ENCODE measurements at regions of chr2 and their contacts with region 1.

Region 1: DNA sequence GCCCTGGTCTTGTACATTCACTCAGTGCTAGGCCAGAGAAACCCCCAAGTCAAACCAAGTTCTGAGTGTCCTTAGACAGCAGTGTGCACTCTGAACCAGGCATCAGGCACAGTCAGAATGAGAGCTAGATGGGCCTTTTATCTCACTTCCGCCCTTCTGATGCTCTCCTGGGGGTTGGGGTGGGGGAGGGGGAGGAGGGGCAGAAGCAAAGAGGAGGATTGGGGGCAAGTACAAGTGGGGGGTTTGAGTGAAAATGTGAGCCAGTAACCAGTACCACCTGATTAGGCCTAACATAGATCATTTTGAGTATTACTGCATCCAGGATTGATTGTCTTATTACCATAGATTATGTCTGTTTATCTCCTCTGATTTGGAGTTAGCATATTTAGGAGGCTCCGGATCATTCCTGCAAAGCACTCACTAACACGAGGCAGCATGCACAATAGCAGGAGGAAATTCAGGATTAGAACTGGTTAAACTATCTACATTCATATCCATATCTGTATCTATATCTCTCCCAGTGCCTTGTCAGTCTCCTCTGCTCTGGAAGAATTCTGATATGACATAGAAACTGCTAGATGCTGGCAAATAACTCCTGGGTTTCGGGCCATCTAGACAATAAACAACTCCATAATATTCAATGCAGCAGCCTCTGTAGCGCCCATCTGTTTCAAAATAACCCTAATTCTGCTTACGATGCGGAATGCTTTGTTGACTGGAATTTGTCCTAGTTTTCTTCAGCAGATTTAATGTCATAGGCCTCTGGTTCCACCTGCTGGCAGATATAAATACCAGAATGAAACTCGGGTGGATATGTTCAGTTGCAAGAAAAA is 149.1 kb downstream of the RHBDD1 start:
- DNase-seq: peak; percentile 15
- H3K4me3 ChIP-seq: no peak overlapping the region
- H3K27ac ChIP-seq: peak overlapping the region in 3 of 4 donors; percentile 4 to 34 (median 31)
- H3K4me1 ChIP-seq: peaks cover 0 to 7% (median 2%) of the 10 kb centered on the region in 4 donors
- H3K27me3 ChIP-seq: no peaks in the 10 kb centered on the region
- CTCF ChIP-seq: peak; percentile 64 to 70 (median 68)
- EP300 ChIP-seq: no peak
- POLR2A ChIP-seq: no peak

Region 2: GRCh38 chr2:225889446-225889850 is 1095.5 kb before region 1 on chr2:
- in situ Hi-C with region 1: loop called in 2 of 4 experiments (anchors 25 kb)
- intact Hi-C with region 1: no loop called
- DNase-seq: no peak
- H3K4me3 ChIP-seq: no peak overlapping the region
- H3K27ac ChIP-seq: no peak overlapping the region
- H3K4me1 ChIP-seq: no peaks in the 10 kb centered on the region
- H3K27me3 ChIP-seq: no peaks in the 10 kb centered on the region
- CTCF ChIP-seq: peak; percentile 64 to 79 (median 73)
- EP300 ChIP-seq: no peak
- POLR2A ChIP-seq: no peak

Region 3: DNA sequence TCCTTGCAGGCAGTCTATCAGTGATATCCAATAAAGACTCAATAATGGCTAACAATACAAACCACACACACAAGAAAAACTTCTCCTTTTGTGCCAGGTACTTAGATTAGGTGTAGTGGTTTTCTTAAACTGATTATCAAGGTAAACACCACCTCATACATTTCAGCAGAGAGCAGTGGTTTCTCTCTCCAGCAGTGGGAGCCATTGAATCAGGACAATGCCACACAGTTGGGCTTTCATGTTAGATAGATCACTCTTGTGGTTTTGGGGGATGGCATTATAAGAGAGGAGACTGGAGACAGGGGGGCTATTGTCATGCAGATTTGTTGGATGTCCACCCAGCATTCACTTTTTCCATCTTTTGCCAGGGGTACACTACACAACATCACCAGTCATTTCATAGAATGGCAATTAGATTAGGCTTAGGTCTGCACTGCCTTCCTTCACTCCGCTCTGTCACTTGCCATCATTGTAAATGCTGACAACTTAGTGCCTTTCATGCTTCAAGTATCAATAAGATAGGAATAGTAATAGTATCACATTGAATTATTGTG is 171.7 kb before region 1 on chr2:
- in situ Hi-C with region 1: loop called (anchors 5 to 25 kb)
- intact Hi-C with region 1: no loop called
- DNase-seq: no peak
- H3K4me3 ChIP-seq: no peak overlapping the region
- H3K27ac ChIP-seq: no peak overlapping the region
- H3K4me1 ChIP-seq: no peaks in the 10 kb centered on the region
- H3K27me3 ChIP-seq: no peaks in the 10 kb centered on the region
- CTCF ChIP-seq: peak in 2 of 5 experiments; percentile 12
- EP300 ChIP-seq: no peak
- POLR2A ChIP-seq: no peak

Region 4: DNA sequence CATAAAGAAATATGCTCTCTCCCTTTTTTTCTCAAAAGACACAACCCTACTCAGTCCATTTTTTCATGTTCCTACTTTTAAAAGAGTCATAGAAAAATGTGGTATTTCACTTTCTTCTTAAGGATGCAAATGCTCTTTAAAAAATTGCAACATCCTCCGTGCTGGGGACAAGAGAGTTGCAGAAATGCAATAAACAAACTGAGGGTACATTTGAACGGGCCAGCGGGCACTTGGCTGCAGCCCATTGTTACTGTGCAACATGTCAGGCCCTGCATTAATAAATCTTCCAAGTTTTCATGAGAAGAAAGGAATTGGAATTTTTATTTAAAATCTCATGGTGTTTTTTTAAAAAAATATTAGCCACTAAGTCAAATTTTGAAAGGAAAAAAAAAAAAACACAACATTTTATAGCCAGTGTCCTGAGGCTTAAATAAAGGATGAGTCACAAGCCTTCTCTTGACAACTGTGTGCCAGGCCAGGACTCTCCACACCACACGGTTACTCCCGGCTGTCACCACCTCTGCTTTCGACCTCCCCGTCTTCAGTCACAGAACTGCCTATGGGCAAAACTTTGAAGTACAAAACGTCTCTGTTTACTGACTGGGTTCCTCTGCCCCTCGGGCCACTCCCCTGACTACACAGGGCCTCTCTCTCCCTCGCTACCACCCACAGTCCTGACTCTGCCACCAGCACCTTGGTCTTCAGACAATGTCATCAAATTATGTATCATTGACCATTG is 282.6 kb after region 1 on chr2:
- in situ Hi-C with region 1: no loop called
- intact Hi-C with region 1: no loop called
- DNase-seq: no peak
- H3K4me3 ChIP-seq: no peak overlapping the region
- H3K27ac ChIP-seq: no peak overlapping the region
- H3K4me1 ChIP-seq: no peaks in the 10 kb centered on the region
- H3K27me3 ChIP-seq: no peaks in the 10 kb centered on the region
- CTCF ChIP-seq: no peak
- EP300 ChIP-seq: no peak
- POLR2A ChIP-seq: no peak

Region 5: DNA sequence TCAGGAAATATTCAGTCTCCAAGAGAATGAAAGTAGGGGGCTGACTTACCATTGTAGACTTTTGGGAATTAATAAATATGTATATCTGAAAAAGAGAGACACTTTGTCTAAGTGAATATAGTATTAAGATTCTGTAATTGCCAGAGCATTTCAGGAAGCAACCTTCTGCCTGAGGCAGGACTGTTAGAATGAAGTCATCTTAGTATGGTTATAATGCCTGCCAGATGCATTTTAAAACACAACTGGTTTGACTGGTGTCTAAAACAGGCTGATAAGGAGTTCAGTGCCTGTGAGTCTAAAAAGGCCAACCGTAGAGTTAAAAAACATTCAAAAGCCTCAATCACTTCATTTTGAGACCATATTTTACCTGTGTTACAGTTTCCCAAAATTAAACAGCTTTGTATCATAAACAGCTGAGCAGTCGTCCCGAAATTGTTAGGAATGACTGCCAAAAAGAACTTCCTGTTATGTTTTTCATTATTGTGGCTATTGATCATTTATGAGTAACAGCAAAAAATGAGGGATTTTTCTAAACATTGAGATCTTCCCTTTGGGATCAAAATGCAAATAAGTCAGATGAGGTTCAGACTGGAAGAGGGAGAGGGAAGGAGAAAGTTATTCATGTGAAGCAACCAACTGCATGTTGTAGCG is 1842.2 kb after region 1 on chr2:
- in situ Hi-C with region 1: no loop called
- intact Hi-C with region 1: no loop called
- DNase-seq: no peak
- H3K4me3 ChIP-seq: no peak overlapping the region
- H3K27ac ChIP-seq: no peak overlapping the region
- H3K4me1 ChIP-seq: no peaks in the 10 kb centered on the region
- H3K27me3 ChIP-seq: no peaks in the 10 kb centered on the region
- CTCF ChIP-seq: no peak
- EP300 ChIP-seq: no peak
- POLR2A ChIP-seq: no peak

Measured in transverse colon (tissue), 4 donors.